ENCODE measurements at regions of chr3 and their contacts with region 1.

Region 1: DNA sequence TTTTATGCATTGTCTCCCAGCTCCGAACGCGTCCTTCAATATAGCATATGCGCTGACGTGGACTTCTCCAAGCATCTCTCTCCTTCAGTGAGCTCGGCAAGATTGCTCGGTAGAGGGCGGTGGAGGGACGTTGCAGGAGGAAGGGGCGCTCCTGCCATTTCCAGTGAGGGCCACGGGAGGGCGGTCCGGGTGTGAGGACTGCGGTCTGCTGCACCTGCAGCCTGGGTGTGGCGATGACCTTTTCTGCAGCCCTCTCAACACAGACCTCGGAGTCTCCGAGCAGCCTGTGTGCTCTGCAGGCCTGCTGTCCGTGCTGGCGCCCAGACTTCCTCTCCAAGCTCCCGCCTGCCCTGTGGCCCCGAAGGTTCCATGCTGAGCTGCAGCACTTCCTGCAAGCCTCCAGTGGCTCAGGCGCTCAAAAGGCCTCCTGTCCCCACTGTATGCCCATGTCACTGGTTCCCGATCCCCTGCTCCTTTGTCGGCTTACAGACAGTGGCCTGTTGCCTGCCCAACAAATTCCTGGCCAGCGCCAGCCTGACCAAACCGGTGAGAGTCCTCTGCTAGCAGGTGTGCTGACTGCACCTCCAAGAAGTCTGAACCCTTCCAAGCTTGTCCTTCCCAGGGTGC is 8.9 kb upstream of the RTP3 start:
- DNase-seq: peak; percentile 81 to 96 (median 90)
- ATAC-seq: peak; percentile 97 to 98
- H3K4me3 Mint-ChIP-seq: peak overlapping the region; percentile 30 to 76 (median 63)
- H3K27ac Mint-ChIP-seq: peak overlapping the region in 7 of 10 donors; percentile 22 to 79 (median 51)
- H3K4me1 Mint-ChIP-seq: peaks cover 2 to 19% (median 12%) of the 10 kb centered on the region in 4 donors
- H3K27me3 Mint-ChIP-seq: no peaks in the 10 kb centered on the region

Region 2: GRCh38 chr3:46478341-46478740 is 10.5 kb before region 1 on chr3:
- POLR2A ChIA-PET with region 1: no interaction called
- DNase-seq: no peak
- ATAC-seq: no peak
- H3K4me3 Mint-ChIP-seq: no peak overlapping the region
- H3K27ac Mint-ChIP-seq: no peak overlapping the region
- H3K4me1 Mint-ChIP-seq: no peaks in the 10 kb centered on the region
- H3K27me3 Mint-ChIP-seq: peaks cover 6 to 28% (median 12%) of the 10 kb centered on the region in 5 donors

Region 3: GRCh38 chr3:46538803-46539442 is 50.1 kb after region 1 on chr3:
- POLR2A ChIA-PET with region 1: interaction called, 16 read pairs
- DNase-seq: peak; percentile 63 to 92 (median 86)
- ATAC-seq: peak; percentile 95
- H3K4me3 Mint-ChIP-seq: peak overlapping the region; percentile 62 to 84 (median 78)
- H3K27ac Mint-ChIP-seq: peak overlapping the region; percentile 91 to 98 (median 95)
- H3K4me1 Mint-ChIP-seq: peaks cover 17 to 71% (median 42%) of the 10 kb centered on the region in 4 donors
- H3K27me3 Mint-ChIP-seq: peaks cover 0 to 12% (median 3%) of the 10 kb centered on the region in 5 donors

Region 4: DNA sequence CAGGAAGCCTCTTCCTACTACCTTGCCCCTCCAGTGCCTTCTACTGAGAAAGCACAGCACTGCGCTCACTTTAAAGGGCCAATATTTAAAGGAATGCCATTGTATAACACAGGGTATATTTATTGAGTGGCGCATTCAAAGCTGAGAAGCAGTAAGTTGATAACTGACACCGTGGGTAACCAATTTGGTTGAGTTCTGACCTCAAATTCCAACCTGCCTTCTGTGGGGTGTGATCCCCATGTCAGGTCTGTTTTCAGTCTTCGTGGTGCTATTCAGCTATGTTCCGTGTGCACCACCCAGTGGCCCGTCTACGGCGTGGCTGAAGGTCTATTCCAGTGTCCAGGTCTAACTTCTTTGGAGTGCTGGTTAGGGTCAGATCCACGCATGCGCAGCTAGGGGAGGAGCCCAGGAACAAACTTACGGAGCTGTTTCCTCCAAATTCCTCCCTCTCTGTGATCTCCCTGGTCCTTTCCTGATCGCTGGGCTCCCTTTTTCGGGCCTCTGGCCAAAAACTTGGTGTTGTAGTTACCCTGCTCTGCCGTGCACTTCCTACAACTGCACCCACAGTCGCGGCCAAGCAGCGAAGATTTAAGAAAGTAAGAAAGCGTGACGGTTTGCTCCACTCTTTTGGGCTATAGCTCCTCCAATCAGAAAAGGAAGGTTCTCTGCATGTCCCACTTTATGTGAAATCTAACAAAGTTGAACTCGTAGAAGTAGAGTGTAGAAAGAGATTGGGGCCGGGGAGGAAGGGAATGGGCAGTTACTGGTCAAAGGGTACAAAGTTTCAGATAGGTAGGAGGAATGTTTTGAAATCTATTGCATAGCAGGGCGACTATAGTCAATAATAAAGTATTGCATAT is 69.6 kb after region 1 on chr3:
- POLR2A ChIA-PET with region 1: interaction called, 20 read pairs
- DNase-seq: peak; percentile 45 to 88 (median 70)
- ATAC-seq: peak; percentile 98 to 99
- H3K4me3 Mint-ChIP-seq: peak overlapping the region; percentile 73 to 87 (median 81)
- H3K27ac Mint-ChIP-seq: peak overlapping the region; percentile 6 to 80 (median 59)
- H3K4me1 Mint-ChIP-seq: peaks cover 8 to 15% (median 13%) of the 10 kb centered on the region in 4 donors
- H3K27me3 Mint-ChIP-seq: peaks cover 2 to 17% (median 8%) of the 10 kb centered on the region in 5 donors